K562 (cell line): ENCODE measurements at regions of chr12 and their contacts with region 1.

Region 1: DNA sequence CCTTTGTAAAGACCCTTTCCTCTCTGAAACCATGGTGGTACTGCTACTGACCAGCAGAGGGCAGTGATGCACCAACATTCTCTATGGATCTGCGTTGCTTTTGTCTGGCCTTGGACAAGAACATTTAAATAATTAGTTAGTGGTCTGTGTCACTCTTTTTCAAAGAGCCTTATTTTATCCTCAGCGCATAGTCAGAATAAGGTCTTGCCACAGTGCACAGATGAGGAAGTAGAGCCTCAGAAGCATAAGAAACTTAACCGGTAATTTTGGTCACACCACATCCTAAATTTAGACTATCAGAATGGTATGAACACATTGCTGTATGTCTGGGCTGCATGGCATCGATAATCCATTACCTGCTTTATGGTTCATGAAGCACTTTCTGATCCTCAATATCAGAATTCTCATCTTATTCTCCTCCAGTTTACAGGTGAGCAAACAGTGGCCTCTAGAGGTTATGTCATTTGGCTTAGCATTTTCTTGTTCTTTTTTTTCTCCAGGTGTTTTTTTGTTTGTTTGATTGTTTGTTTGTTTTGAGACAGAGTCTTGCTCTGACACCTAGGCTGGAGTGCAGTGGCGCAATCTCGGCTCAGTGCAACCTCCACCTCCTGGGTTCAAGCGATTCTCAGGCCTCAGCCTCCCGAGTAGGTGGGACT is 23.7 kb upstream of the IFT81 start:
- DNase-seq: peak; percentile 61 to 84 (median 62)
- ATAC-seq: peak; percentile 72
- H3K4me3 ChIP-seq: no peak overlapping the region
- H3K27ac ChIP-seq: no peak overlapping the region; the same call in 2 of the 3 replicates
- H3K4me1 ChIP-seq: peaks cover 6 to 13% of the 10 kb centered on the region in 2 experiments; a peak in 4 of 5 replicates
- H3K27me3 ChIP-seq: no peaks in the 10 kb centered on the region
- CTCF ChIP-seq: peak; percentile 83 to 87 (median 86)
- EP300 ChIP-seq: no peak
- POLR2A ChIP-seq: no peak
- RAD21 ChIP-seq: peak; percentile 82 to 91

Region 2: GRCh38 chr12:110183386-110183785 is 82.9 kb after region 1 on chr12:
- CTCF ChIA-PET with region 1: no interaction called
- POLR2A ChIA-PET with region 1: no interaction called
- in situ Hi-C with region 1: no loop called
- intact Hi-C with region 1: loop called (anchors 1 kb)
- DNase-seq: no peak
- ATAC-seq: no peak
- H3K4me3 ChIP-seq: no peak overlapping the region
- H3K27ac ChIP-seq: no peak overlapping the region
- H3K4me1 ChIP-seq: no peaks in the 10 kb centered on the region
- H3K27me3 ChIP-seq: no peaks in the 10 kb centered on the region
- CTCF ChIP-seq: 0 out of 6 replicates have a peak, but pooled peaks of 1 of the 3 experiments have one; percentile 6
- EP300 ChIP-seq: no peak
- POLR2A ChIP-seq: no peak
- RAD21 ChIP-seq: peak in 1 of 2 experiments; percentile 30; a peak in 1 of 4 replicates

Region 3: DNA sequence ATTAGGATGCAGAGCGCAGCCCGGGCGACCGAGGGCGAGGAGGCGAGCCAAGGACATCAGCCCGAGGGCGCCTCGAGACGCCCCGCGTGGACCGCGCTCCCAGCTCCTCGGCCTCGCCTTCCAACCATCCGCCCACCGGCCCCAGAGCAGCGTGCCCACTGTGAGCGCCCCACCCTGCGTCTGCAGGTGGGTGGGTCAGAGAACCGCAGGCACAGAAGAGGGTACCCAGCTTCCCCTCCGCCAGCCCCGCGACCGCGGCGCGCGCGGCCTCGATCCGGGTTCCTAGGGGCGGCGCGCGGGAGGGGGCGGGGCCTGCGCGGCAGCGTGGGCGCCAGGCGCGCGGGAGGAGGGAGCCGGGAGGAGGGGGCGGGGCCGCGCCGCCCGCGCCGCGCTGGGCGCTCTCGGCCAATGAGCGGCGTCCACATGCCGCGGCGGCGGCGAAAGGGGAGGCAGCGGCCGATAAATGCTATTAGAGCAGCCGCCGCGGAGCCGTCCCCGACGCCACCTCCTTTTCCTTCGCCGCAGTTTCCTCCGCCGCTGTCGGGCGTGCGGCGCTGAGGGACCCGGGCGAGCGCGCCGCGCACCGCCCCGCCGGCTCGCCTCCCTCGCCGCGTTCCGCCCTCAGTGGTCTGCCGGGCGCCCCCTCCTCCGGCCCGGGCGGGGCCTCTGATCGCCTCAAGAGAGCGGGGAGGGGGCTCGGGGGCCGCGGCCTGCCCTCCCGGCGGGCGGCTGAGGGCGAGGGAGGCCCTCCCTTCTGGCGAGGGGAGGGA is 180.5 kb after region 1 on chr12 and contains the start of gene ATP2A2:
- CTCF ChIA-PET with region 1: interaction called, 3 read pairs
- POLR2A ChIA-PET with region 1: interaction called, 4 read pairs
- in situ Hi-C with region 1: no loop called
- intact Hi-C with region 1: loop called (anchors 1 kb)
- DNase-seq: peak; percentile 95 to 96 (median 96)
- ATAC-seq: peak; percentile 85
- H3K4me3 ChIP-seq: peak within 1 kb of the TSS; percentile 87
- H3K27ac ChIP-seq: peak within 1 kb of the TSS; percentile 96
- H3K4me1 ChIP-seq: peaks cover 19 to 22% of the 10 kb centered on the region in 2 experiments; a peak in 4 of 5 replicates
- H3K27me3 ChIP-seq: no peaks in the 10 kb centered on the region
- CTCF ChIP-seq: no peak
- EP300 ChIP-seq: no peak
- POLR2A ChIP-seq: peak; percentile 89
- RAD21 ChIP-seq: no peak
- polyA plus RNA-seq, gene ATP2A2: 5.2 to 6.7 TPM

Region 4: GRCh38 chr12:110355073-110355472 is 254.6 kb after region 1 on chr12:
- CTCF ChIA-PET with region 1: no interaction called
- POLR2A ChIA-PET with region 1: no interaction called
- in situ Hi-C with region 1: no loop called
- intact Hi-C with region 1: loop called (anchors 10 kb)
- DNase-seq: peak; percentile 58 to 65 (median 61)
- ATAC-seq: peak; percentile 80
- H3K4me3 ChIP-seq: no peak overlapping the region
- H3K27ac ChIP-seq: no peak overlapping the region
- H3K4me1 ChIP-seq: peaks cover 8 to 21% of the 10 kb centered on the region in 2 experiments; a peak in 4 of 5 replicates
- H3K27me3 ChIP-seq: no peaks in the 10 kb centered on the region
- CTCF ChIP-seq: peak; percentile 61 to 71 (median 66)
- EP300 ChIP-seq: no peak
- POLR2A ChIP-seq: no peak
- RAD21 ChIP-seq: peak in 1 of 2 experiments; percentile 66; a peak in 3 of 4 replicates

Region 5: GRCh38 chr12:110431957-110432587 is 331.6 kb after region 1 on chr12:
- CTCF ChIA-PET with region 1: interaction called, 11 read pairs
- POLR2A ChIA-PET with region 1: no interaction called
- in situ Hi-C with region 1: loop called (anchors 10 kb)
- intact Hi-C with region 1: loop called (anchors 1 kb)
- DNase-seq: no peak
- ATAC-seq: no peak
- H3K4me3 ChIP-seq: no peak overlapping the region
- H3K27ac ChIP-seq: peak overlapping the region; percentile 40; the same call in 1 of the 3 replicates
- H3K4me1 ChIP-seq: peaks cover 0 to 11% of the 10 kb centered on the region in 2 experiments; a peak in 2 of 5 replicates
- H3K27me3 ChIP-seq: no peaks in the 10 kb centered on the region
- CTCF ChIP-seq: no peak
- EP300 ChIP-seq: no peak
- POLR2A ChIP-seq: no peak
- RAD21 ChIP-seq: no peak

Region 6: DNA sequence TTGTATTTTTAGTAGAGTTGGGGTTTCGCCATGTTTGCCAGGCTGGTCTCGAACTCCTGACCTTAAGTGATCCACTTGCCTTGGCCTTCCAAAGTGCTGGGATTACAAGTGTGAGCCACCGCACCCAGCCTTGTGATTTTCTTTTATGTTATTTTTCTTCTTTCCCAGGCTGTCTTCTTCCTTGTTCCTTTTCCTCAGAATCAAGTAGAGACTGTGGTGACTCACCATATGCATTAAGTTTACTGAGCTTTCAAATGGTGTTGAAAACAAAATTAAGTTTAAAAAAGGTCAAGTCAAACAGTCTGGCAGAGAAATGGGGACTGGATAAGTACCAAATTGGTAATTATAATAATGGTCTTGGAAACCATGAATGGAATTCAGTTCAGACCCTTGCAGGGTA is 344.0 kb after region 1 on chr12:
- CTCF ChIA-PET with region 1: no interaction called
- POLR2A ChIA-PET with region 1: no interaction called
- in situ Hi-C with region 1: no loop called
- intact Hi-C with region 1: no loop called
- DNase-seq: no peak
- ATAC-seq: no peak
- H3K4me3 ChIP-seq: no peak overlapping the region
- H3K27ac ChIP-seq: no peak overlapping the region
- H3K4me1 ChIP-seq: peaks cover 0 to 6% of the 10 kb centered on the region in 2 experiments; a peak in 1 of 5 replicates
- H3K27me3 ChIP-seq: no peaks in the 10 kb centered on the region
- CTCF ChIP-seq: no peak
- EP300 ChIP-seq: no peak
- POLR2A ChIP-seq: no peak
- RAD21 ChIP-seq: no peak